MCF 10A (cell line): ENCODE measurements at regions of chr12 and their contacts with region 1.

Region 1: DNA sequence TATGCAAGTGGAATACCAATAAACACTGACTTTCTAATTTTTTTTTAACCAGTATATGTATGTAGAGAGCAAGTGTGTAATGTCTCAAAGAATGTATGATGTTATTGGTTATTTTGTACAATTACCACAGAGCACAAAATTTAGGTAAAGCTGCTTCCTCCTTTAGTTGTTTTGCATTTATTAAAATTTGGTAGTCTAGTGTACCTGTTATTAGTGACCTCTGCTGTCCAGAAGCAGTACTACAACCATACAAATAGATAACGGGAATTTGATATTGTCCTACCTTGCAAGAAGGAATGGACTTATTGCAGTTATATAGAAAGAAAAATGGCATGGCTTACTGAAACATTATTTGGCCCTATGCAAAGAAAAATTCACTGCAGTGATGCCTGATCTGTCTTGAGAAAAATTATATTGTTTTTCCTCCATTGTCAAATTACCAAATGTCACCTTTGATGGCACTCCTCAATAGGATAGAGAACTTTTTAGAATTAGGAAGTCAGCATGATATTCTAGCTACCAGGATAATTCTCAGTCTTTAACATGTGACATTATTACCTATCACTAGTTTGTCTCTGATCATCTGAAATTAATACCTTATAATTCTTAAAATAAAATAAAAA is 153.9 kb upstream of the RMST start:
- DNase-seq: peak; percentile 57
- H3K4me3 Mint-ChIP-seq: no peak overlapping the region
- H3K27ac Mint-ChIP-seq: no peak overlapping the region
- H3K4me1 Mint-ChIP-seq: no peaks in the 10 kb centered on the region
- H3K27me3 Mint-ChIP-seq: peaks cover 51% of the 10 kb centered on the region
- CTCF ChIP-seq: peak; percentile 57

Region 2: DNA sequence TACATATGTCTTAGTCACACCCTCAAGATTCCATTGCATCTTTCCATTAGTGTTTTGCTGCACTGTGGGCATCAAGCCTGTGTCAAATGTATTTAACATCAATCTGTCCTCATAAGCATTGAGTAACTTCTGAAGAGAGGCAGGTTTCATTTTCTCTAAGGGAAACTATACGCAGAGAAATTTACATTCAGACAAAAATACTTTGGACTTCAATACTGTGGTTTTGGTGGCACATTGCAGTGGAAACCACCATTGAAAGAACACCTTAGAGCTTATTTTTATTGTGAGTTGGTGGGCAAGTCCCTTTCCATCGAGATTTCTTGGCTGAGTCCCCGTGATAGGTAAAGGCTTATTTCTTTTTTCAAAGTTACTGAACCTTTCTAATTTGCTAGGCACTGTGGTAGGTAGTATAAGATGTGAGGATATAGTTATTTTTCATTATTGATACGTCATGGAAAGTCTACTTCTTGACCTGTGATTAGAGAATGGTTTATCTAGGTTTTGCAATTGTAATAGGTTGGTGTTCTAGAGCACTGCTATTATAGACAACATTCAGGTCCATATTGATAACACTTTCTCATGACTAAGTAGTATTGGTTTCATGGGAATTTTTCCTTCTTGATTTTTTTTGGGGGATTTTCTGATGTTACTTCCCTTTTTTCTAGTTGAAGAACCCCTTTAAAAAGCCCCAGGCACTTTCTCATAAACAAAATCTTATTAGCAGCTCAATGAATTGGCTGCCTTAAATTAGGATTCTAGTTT is 737.4 kb before region 1 on chr12:
- CTCF ChIA-PET with region 1: no interaction called
- POLR2A ChIA-PET with region 1: no interaction called
- intact Hi-C with region 1: no loop called
- DNase-seq: no peak
- H3K4me3 Mint-ChIP-seq: no peak overlapping the region
- H3K27ac Mint-ChIP-seq: no peak overlapping the region
- H3K4me1 Mint-ChIP-seq: peaks cover 5% of the 10 kb centered on the region
- H3K27me3 Mint-ChIP-seq: no peaks in the 10 kb centered on the region
- CTCF ChIP-seq: no peak

Region 3: GRCh38 chr12:97148941-97149559 is 159.6 kb before region 1 on chr12:
- CTCF ChIA-PET with region 1: interaction called, 3 read pairs
- POLR2A ChIA-PET with region 1: no interaction called
- intact Hi-C with region 1: loop called (anchors 2 kb)
- DNase-seq: peak; percentile 53
- H3K4me3 Mint-ChIP-seq: no peak overlapping the region
- H3K27ac Mint-ChIP-seq: no peak overlapping the region
- H3K4me1 Mint-ChIP-seq: no peaks in the 10 kb centered on the region
- H3K27me3 Mint-ChIP-seq: peaks cover 21% of the 10 kb centered on the region
- CTCF ChIP-seq: peak; percentile 64

Region 4: GRCh38 chr12:97784904-97785303 is 476.2 kb after region 1 on chr12:
- CTCF ChIA-PET with region 1: no interaction called
- POLR2A ChIA-PET with region 1: no interaction called
- intact Hi-C with region 1: no loop called
- DNase-seq: no peak
- H3K4me3 Mint-ChIP-seq: no peak overlapping the region
- H3K27ac Mint-ChIP-seq: no peak overlapping the region
- H3K4me1 Mint-ChIP-seq: no peaks in the 10 kb centered on the region
- H3K27me3 Mint-ChIP-seq: no peaks in the 10 kb centered on the region
- CTCF ChIP-seq: no peak